ENCODE measurements at regions of chr11 and their contacts with region 1.

Region 1: DNA sequence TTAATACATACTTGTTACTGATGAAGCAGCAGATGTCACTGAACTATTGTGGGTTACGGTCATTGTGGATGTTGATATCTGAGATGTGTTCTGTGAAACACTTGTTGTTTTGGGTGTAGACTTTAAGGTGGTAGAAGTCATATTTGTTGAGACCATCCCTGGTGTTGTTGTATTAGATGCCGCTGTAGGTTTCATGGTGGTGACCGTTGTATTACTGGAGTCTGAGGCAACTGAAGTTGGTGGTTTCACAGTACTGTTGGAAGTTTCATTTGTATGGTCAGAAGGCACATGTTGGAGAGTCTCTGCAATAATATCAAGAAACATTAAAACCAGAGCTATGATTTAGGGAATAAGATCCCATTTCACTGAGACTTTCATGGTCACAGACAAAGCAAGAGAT is 50.7 kb downstream of the TMEM123 start:
- DNase-seq: no peak
- H3K4me3 ChIP-seq: no peak overlapping the region
- H3K27ac ChIP-seq: no peak overlapping the region
- H3K4me1 ChIP-seq: peaks cover 8% of the 10 kb centered on the region
- H3K27me3 ChIP-seq: no peaks in the 10 kb centered on the region
- CTCF ChIP-seq: no peak
- POLR2A ChIP-seq: no peak

Region 2: GRCh38 chr11:101718402-101718801 is 683.5 kb before region 1 on chr11:
- intact Hi-C with region 1: no loop called
- DNase-seq: no peak
- H3K4me3 ChIP-seq: no peak overlapping the region
- H3K27ac ChIP-seq: no peak overlapping the region
- H3K4me1 ChIP-seq: peaks cover 5% of the 10 kb centered on the region
- H3K27me3 ChIP-seq: no peaks in the 10 kb centered on the region
- CTCF ChIP-seq: no peak
- POLR2A ChIP-seq: no peak

Region 3: DNA sequence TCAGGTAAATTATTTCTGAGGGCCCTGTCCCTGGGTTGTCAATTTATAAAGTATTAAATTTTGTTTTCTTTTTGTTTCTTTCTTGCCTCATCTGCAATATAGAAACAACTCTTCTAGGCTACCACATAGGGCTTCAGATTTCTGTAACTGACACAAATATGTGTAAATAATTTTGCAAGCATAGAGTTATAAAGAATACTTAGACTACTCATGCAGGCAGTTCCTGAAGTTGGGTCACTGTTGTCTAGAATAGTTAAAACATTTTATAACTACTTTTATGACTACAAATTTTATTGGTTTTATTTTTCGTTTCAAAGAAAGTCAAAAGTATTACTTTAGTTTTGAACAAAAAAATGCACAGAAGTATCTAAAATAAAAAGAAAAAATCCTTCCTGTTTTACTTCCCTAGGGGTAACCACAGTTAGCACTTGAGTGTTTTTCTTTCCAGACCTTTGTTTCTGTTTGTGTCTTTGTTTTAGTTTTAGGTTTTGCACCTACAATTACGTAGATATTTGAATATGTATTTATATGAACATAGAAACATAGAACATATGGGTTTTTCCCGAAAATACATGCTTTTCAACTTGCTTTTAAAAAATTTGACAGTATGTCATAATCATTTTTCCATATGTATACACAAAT is 63.1 kb after region 1 on chr11:
- intact Hi-C with region 1: no loop called
- DNase-seq: no peak
- H3K4me3 ChIP-seq: no peak overlapping the region
- H3K27ac ChIP-seq: no peak overlapping the region
- H3K4me1 ChIP-seq: peaks cover 23% of the 10 kb centered on the region
- H3K27me3 ChIP-seq: no peaks in the 10 kb centered on the region
- CTCF ChIP-seq: no peak
- POLR2A ChIP-seq: no peak

Region 4: DNA sequence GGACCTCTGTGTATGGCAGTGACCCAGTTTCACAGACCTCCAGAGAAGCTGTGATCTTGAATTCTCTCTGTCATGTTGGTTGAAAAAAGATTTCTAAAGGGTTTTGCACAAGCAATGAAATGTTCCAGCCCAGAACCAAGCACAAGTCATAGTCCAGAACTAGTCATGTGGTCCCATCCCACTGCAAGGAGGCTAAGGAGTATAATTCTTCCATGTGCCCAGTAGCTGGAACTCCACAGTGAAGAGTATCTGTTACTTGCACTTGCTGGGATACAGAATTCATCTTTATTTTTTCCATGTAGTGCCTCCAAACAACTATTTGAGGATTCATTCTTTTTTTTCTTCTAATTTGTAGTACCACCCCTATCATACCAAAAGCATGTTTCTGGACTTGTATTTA is 332.7 kb after region 1 on chr11:
- intact Hi-C with region 1: loop called (anchors 5 kb)
- DNase-seq: no peak
- H3K4me3 ChIP-seq: no peak overlapping the region
- H3K27ac ChIP-seq: no peak overlapping the region
- H3K4me1 ChIP-seq: no peaks in the 10 kb centered on the region
- H3K27me3 ChIP-seq: no peaks in the 10 kb centered on the region
- CTCF ChIP-seq: no peak
- POLR2A ChIP-seq: no peak

Measured in vagina (tissue), 2 donors.